CD4-positive, alpha-beta T cell (primary cell): ENCODE measurements at regions of chr10 and their contacts with region 1.

Region 1: DNA sequence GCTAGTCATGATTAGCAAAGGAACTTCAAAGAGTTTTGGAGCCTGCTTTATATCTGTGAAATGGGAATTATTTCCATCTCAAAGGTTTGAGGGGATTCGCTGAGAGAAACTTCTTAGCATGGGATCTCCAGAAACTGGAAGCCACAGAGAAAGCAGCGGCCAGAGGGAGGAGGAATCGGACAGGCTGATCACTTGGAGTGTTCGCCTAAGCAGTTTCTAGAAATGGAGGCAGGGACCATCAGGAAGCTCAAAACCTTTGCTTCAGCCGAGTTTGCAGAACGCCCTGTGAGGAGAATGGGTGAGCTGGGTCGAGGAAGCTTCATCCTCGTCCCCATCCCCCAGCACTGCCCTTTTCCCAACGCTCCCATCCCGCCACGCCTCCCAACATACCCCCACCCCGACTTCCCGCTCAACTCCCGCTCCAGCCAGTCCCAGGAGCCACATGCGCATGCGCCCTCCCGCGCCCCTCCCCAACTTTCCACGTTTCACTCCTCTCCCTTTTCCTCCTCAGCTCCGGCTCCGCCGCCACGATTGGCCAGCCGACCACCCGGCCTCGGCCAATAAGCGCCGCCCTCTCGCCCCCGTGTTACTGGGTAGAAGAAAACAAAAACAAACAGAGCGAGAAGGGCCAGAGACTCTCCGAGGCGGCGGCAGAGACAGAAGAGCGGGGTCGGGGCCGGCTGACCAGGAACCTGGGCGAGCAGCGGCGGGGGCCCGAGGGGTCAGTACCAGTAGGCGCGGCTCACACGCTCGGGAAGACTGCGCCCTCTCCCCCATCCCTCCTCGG is at the start of gene PDCD4:
- DNase-seq: peak; percentile 87 to 96 (median 90)
- ATAC-seq: peak; percentile 56
- H3K4me3 ChIP-seq: peak within 1 kb of the TSS; percentile 86
- H3K4me3 Mint-ChIP-seq: peak within 1 kb of the TSS; percentile 99
- H3K27ac ChIP-seq: peak within 1 kb of the TSS; percentile 93 to 99
- H3K27ac Mint-ChIP-seq: peak within 1 kb of the TSS; percentile 96
- H3K4me1 ChIP-seq: peaks cover 54% of the 10 kb centered on the region
- H3K4me1 Mint-ChIP-seq: peaks cover 85% of the 10 kb centered on the region
- H3K27me3 ChIP-seq: no peaks in the 10 kb centered on the region
- H3K27me3 Mint-ChIP-seq: no peaks in the 10 kb centered on the region
- CTCF ChIP-seq: no peak
- total RNA-seq, gene PDCD4: 352 to 358 TPM

Region 2: DNA sequence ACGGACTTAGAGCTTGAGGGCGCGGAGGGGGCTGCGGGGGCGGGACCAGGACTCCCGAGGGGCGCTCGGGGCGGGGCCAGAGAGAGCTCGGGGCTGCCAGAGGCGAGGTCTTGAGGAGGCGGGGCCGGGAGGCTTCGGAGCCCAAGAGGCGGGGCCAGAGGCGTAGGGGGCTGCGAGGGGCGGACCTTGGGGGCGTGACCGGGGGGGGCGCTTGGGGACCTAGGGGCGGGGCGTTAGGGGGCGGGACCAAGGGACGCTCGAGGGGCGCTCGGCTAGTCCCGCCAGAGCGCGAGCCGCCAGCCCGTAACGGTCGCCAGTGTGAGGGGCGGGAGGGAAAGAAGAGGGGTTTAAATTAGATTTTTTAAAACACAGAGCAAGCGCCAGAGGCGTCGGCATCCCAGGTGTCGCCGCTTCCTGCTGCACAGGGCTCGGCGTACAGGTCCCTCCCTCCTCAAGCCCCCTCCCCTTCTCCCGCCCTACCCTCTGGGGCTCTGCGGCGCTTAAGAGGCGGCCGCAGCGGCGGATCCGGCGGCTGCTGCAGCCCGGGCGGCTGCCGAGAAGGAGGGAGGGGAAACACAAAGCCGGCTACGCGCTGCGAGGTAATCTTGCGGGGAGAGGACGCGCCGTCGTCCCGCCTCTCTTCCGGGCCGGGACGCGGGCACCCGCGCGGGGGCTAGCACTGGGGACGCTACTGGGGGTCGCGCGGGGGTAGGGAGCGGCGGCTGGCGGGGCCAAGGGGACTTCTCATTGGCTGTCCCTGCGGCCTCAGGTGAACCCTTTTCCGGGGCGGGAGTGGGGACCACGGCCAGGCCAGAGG is 863.6 kb before region 1 on chr10 and contains the start of gene ADD3:
- CTCF ChIA-PET with region 1: no interaction called
- POLR2A ChIA-PET with region 1: no interaction called
- intact Hi-C with region 1: no loop called
- DNase-seq: peak; percentile 83 to 97 (median 90)
- ATAC-seq: peak; percentile 72
- H3K4me3 ChIP-seq: peak within 1 kb of the TSS; percentile 63
- H3K4me3 Mint-ChIP-seq: peak within 1 kb of the TSS; percentile 99
- H3K27ac ChIP-seq: peak within 1 kb of the TSS; percentile 64 to 93
- H3K27ac Mint-ChIP-seq: no peak within 1 kb of the TSS
- H3K4me1 ChIP-seq: peaks cover 20% of the 10 kb centered on the region
- H3K4me1 Mint-ChIP-seq: peaks cover 50% of the 10 kb centered on the region
- H3K27me3 ChIP-seq: no peaks in the 10 kb centered on the region
- H3K27me3 Mint-ChIP-seq: no peaks in the 10 kb centered on the region
- CTCF ChIP-seq: no peak
- total RNA-seq, gene ADD3: 273 to 302 TPM

Region 3: GRCh38 chr10:110252151-110252550 is 619.3 kb before region 1 on chr10:
- CTCF ChIA-PET with region 1: no interaction called
- POLR2A ChIA-PET with region 1: no interaction called
- intact Hi-C with region 1: no loop called
- DNase-seq: no peak
- ATAC-seq: no peak
- H3K4me3 ChIP-seq: no peak overlapping the region
- H3K4me3 Mint-ChIP-seq: no peak overlapping the region
- H3K27ac ChIP-seq: no peak overlapping the region
- H3K27ac Mint-ChIP-seq: no peak overlapping the region
- H3K4me1 ChIP-seq: no peaks in the 10 kb centered on the region
- H3K4me1 Mint-ChIP-seq: peaks cover 31% of the 10 kb centered on the region
- H3K27me3 ChIP-seq: no peaks in the 10 kb centered on the region
- H3K27me3 Mint-ChIP-seq: no peaks in the 10 kb centered on the region
- CTCF ChIP-seq: no peak

Region 4: GRCh38 chr10:110556969-110557601 is 314.4 kb before region 1 on chr10:
- CTCF ChIA-PET with region 1: no interaction called
- POLR2A ChIA-PET with region 1: no interaction called
- intact Hi-C with region 1: no loop called
- DNase-seq: peak; percentile 42 to 86 (median 60)
- ATAC-seq: peak; percentile 98
- H3K4me3 ChIP-seq: no peak overlapping the region
- H3K4me3 Mint-ChIP-seq: no peak overlapping the region
- H3K27ac ChIP-seq: no peak overlapping the region
- H3K27ac Mint-ChIP-seq: no peak overlapping the region
- H3K4me1 ChIP-seq: peaks cover 5% of the 10 kb centered on the region
- H3K4me1 Mint-ChIP-seq: peaks cover 4% of the 10 kb centered on the region
- H3K27me3 ChIP-seq: peaks cover 0 to 4% of the 10 kb centered on the region in 2 experiments
- H3K27me3 Mint-ChIP-seq: peaks cover 5% of the 10 kb centered on the region
- CTCF ChIP-seq: peak; percentile 85

Region 5: DNA sequence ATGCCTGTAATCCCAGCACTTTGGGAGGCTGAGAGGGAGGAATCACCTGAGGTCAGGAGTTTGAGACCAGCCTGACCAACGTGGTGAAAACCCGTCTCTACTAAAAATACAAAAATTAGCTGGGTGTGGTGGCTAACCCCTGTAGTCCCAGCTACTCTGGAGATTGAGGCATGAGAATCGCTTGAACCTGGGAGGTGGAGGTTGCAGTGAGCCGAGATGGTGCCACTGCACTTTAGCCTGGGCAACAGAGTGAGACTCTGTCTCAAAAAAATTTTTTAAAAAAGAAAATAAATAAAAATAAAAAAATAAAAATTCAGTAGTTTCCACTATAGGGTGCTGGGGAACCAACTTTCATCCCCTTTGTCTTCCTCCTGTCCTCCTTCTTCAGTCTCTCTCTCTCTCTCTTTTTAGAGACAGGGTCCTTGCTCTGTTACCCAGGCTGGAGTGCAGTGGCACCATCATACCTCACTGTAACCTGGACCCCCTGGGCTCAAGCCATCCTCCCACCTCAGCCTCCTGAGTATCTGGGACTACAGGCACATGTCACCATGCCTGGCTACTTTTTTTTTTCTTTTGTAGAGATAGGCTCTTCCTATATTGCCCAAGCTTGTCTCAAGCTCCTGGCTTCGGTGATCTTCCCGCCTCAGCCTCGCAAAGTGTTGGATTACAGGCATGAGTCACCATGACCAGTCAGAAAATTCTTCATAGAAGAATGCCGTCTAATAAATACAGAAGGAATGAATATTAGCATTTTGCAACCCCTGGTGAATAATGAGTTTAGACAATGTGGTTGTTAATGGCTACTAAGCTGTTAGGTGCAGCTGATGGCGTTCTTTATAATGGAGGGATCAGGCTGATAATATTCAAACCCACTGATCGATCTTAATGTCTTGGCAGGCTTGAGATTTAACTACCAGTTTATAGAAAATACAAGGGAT is 206.7 kb before region 1 on chr10:
- CTCF ChIA-PET with region 1: no interaction called
- POLR2A ChIA-PET with region 1: no interaction called
- intact Hi-C with region 1: no loop called
- DNase-seq: peak in 1 of 14 experiments; percentile 17
- ATAC-seq: no peak
- H3K4me3 ChIP-seq: no peak overlapping the region
- H3K4me3 Mint-ChIP-seq: no peak overlapping the region
- H3K27ac ChIP-seq: no peak overlapping the region
- H3K27ac Mint-ChIP-seq: no peak overlapping the region
- H3K4me1 ChIP-seq: no peaks in the 10 kb centered on the region
- H3K4me1 Mint-ChIP-seq: no peaks in the 10 kb centered on the region
- H3K27me3 ChIP-seq: no peaks in the 10 kb centered on the region
- H3K27me3 Mint-ChIP-seq: no peaks in the 10 kb centered on the region
- CTCF ChIP-seq: no peak

Region 6: GRCh38 chr10:110803830-110804338 is 67.6 kb before region 1 on chr10:
- CTCF ChIA-PET with region 1: interaction called, 14 read pairs
- POLR2A ChIA-PET with region 1: interaction called, 50 read pairs
- intact Hi-C with region 1: loop called (anchors 1 to 5 kb)
- DNase-seq: peak in 9 of 14 experiments; percentile 7 to 71 (median 35)
- ATAC-seq: no peak
- H3K4me3 ChIP-seq: no peak overlapping the region
- H3K4me3 Mint-ChIP-seq: peak overlapping the region; percentile 59
- H3K27ac ChIP-seq: peak overlapping the region; percentile 45 to 54
- H3K27ac Mint-ChIP-seq: peak overlapping the region; percentile 88
- H3K4me1 ChIP-seq: peaks cover 28% of the 10 kb centered on the region
- H3K4me1 Mint-ChIP-seq: peaks cover 49% of the 10 kb centered on the region
- H3K27me3 ChIP-seq: no peaks in the 10 kb centered on the region
- H3K27me3 Mint-ChIP-seq: no peaks in the 10 kb centered on the region
- CTCF ChIP-seq: peak; percentile 42

Region 7: GRCh38 chr10:110834629-110835301 is 36.7 kb before region 1 on chr10:
- CTCF ChIA-PET with region 1: interaction called, 7 read pairs
- POLR2A ChIA-PET with region 1: interaction called, 13 read pairs
- intact Hi-C with region 1: loop called (anchors 5 kb)
- DNase-seq: peak in 12 of 14 experiments; percentile 10 to 65 (median 34)
- ATAC-seq: peak; percentile 96
- H3K4me3 ChIP-seq: no peak overlapping the region
- H3K4me3 Mint-ChIP-seq: peak overlapping the region; percentile 3
- H3K27ac ChIP-seq: no peak overlapping the region
- H3K27ac Mint-ChIP-seq: peak overlapping the region; percentile 89
- H3K4me1 ChIP-seq: peaks cover 43% of the 10 kb centered on the region
- H3K4me1 Mint-ChIP-seq: peaks cover 55% of the 10 kb centered on the region
- H3K27me3 ChIP-seq: no peaks in the 10 kb centered on the region
- H3K27me3 Mint-ChIP-seq: no peaks in the 10 kb centered on the region
- CTCF ChIP-seq: no peak

Region 8: DNA sequence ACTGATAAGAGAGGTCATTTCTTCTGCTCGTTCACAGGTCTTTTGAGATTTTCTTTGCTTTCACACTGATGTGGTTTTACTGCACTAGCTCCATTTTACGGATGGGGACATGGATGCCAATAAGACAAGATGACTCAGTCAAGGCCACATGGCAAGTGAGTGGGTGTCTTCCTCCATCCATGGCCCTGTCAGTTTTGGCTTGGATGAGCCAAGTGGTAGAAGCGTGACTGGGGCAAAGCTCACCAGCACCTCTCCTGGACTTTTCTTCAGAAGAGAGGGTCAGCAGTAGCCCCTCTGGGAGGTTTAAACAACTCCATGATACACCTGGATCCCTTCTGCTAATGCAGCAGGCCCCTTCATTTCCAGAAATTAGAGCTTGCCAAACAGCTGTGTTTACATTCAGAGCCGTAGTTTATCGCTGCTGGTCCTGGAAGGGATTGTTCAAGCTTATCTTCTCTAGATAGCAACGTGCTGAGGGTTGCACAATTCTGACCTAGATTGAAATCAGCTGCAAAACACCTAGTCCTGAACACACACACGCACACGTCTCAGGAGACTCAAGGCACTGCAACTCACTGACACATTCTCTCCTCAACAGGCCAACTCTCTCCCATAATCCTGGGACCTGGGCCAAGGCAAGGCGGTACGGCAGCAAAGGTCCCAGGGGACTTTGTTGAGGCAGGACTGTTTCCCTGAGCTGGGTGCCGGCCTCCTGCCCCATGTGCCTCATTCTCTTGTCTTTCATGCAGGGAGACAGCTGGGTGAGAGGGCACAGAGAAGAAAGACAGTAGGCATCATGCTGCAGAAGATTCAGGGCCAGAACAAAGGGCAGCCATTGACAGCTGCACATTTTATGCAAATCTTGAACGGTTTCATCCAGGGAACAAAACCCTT is 14.0 kb before region 1 on chr10:
- CTCF ChIA-PET with region 1: interaction called, 14 read pairs
- POLR2A ChIA-PET with region 1: interaction called, 102 read pairs
- intact Hi-C with region 1: loop called in 1 of 2 experiments (anchors 1 kb)
- DNase-seq: peak in 5 of 14 experiments; percentile 32 to 74 (median 58)
- ATAC-seq: peak; percentile 43
- H3K4me3 ChIP-seq: no peak overlapping the region
- H3K4me3 Mint-ChIP-seq: peak overlapping the region; percentile 49
- H3K27ac ChIP-seq: peak overlapping the region; percentile 77 to 88
- H3K27ac Mint-ChIP-seq: peak overlapping the region; percentile 96
- H3K4me1 ChIP-seq: peaks cover 80% of the 10 kb centered on the region
- H3K4me1 Mint-ChIP-seq: peaks cover 89% of the 10 kb centered on the region
- H3K27me3 ChIP-seq: no peaks in the 10 kb centered on the region
- H3K27me3 Mint-ChIP-seq: no peaks in the 10 kb centered on the region
- CTCF ChIP-seq: no peak

Region 9: GRCh38 chr10:110893559-110894179 is 22.2 kb after region 1 on chr10:
- CTCF ChIA-PET with region 1: interaction called, 5 read pairs
- POLR2A ChIA-PET with region 1: interaction called, 5 read pairs
- intact Hi-C with region 1: loop called in 1 of 2 experiments (anchors 2 kb)
- DNase-seq: peak in 4 of 14 experiments; percentile 10 to 77 (median 74)
- ATAC-seq: peak; percentile 74
- H3K4me3 ChIP-seq: no peak overlapping the region
- H3K4me3 Mint-ChIP-seq: peak overlapping the region; percentile 6
- H3K27ac ChIP-seq: no peak overlapping the region
- H3K27ac Mint-ChIP-seq: peak overlapping the region; percentile 51
- H3K4me1 ChIP-seq: no peaks in the 10 kb centered on the region
- H3K4me1 Mint-ChIP-seq: peaks cover 61% of the 10 kb centered on the region
- H3K27me3 ChIP-seq: no peaks in the 10 kb centered on the region
- H3K27me3 Mint-ChIP-seq: no peaks in the 10 kb centered on the region
- CTCF ChIP-seq: peak; percentile 79